Testis (tissue), 5 donors: ENCODE measurements at regions of chr2 and their contacts with region 1.

Region 1: DNA sequence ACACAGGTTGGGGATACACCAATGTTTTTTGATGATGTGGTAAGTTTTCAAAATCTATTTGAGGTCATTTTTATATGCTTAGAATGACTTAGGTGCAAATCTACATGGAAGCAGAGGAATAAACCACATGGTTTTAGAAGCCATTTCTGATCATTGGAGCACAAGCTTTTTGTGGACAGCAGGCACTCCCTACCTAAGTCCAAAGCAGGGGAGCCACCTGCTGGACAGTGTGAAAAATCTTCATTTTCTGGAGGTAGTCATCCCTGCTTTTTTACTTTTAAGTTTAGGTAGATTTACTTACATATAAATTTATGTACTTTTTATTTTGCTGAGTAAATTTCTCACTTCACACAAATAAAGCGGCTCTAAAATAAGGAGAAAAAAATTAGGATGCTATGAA is 323.2 kb downstream of the PLCL1 start:
- DNase-seq: no peak
- H3K4me3 ChIP-seq: no peak overlapping the region
- H3K27ac ChIP-seq: no peak overlapping the region
- H3K4me1 ChIP-seq: no peaks in the 10 kb centered on the region
- H3K27me3 ChIP-seq: no peaks in the 10 kb centered on the region
- CTCF ChIP-seq: peak; percentile 40 to 67 (median 49)
- POLR2A ChIP-seq: no peak

Region 2: DNA sequence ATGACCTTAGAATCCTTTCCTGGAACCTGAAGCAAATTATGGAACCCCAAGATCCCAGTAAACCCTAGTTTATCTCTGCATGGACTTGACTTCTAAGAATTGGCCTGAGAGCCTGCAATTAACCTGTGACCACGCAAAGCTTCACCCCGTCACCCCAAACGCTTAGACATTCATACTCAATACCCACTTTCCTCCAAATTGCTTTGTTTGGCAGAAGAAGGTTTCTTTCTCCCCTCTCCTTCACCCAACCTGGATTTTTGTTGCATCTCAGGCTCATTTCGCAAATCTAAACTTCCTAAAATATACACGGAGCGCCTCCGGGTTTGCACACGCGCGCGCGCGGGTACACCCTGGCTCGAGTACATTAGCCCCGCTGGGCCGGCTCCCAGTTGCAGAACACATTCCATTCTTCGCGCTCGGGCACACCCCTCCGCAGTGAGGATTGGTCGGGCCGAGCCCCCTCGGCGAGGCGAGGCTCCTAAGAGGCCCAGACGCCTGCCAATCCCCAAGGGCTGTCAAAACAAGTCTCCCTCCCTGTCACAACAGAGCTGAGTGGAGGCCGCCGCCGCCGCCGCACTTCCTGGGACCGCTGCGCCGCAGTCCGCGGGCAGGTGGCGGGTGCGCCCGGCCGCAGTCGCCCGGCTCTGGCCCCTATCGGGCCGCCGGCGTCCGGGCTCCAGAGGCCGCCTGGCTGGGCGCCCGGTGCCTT is 323.4 kb before region 1 on chr2 and contains the start of gene PLCL1:
- intact Hi-C with region 1: loop called (anchors 10 kb)
- DNase-seq: peak; percentile 96
- H3K4me3 ChIP-seq: peak within 1 kb of the TSS; percentile 73 to 76
- H3K27ac ChIP-seq: peak within 1 kb of the TSS in 1 of 2 donors; percentile 38
- H3K4me1 ChIP-seq: no peaks in the 10 kb centered on the region
- H3K27me3 ChIP-seq: no peaks in the 10 kb centered on the region
- CTCF ChIP-seq: peak in 2 of 3 experiments; percentile 4 to 13
- POLR2A ChIP-seq: no peak
- total RNA-seq, gene PLCL1: 2.1 to 2.4 TPM